Dorsolateral prefrontal cortex (tissue), 120 donors: ENCODE measurements at regions of chr3 and their contacts with region 1.

Region 1: DNA sequence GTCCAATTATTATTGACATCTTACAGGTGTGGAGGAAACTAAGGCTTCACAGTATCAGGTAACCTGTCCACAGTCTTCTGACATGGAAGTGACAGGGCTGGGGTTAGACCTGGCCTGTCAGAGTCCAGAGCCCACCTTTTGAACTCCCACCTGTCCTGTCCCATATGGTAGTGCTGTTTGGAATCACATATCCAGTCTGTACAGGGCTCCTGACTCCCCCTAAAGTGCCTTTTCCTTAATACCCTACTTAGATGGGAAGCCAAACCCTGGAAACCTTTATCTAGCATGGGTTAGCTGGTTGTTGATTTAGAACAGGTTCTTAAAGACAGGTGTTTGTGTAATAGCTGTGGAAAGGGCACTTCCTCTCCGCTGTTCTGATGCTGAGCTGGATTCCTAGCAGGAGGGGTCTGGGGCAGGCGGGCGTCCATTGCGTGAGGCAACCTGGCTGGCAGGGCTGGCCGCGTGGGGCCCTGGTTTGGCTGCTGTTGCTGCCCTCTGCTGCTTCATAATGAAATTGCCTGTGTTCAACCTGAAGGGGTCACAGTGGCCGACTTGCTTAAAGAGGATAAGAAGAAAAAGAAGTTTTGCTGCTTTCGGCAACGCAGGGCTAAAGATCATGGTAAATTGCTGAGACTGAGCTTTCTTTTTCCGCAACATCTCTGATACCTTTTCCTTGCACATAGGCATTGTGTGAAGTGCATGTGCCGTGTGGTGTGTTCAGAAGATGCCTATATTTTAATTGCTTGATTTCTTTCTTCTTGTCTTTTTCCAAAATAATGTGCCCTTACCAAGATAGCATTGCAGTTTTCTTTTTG is 136.2 kb downstream of the CHDH start:
- DNase-seq: peak; percentile 51 to 75 (median 65)
- H3K4me3 ChIP-seq: peak overlapping the region in 2 of 59 donors; percentile 20 to 27
- H3K27ac ChIP-seq: no peak overlapping the region
- H3K27me3 ChIP-seq: no peaks in the 10 kb centered on the region
- CTCF ChIP-seq: peak; percentile 53 to 94 (median 85)

Region 2: GRCh38 chr3:53236112-53236841 is 473.8 kb before region 1 on chr3:
- intact Hi-C with region 1: loop called in 1 of 2 experiments (anchors 10 kb)
- DNase-seq: peak in 7 of 10 donors; percentile 14 to 86 (median 54)
- H3K4me3 ChIP-seq: peak overlapping the region in 1 of 59 donors; percentile 21
- H3K27ac ChIP-seq: peak overlapping the region in 58 of 59 donors; percentile 40 to 92 (median 80)
- H3K27me3 ChIP-seq: no peaks in the 10 kb centered on the region
- CTCF ChIP-seq: no peak

Region 3: GRCh38 chr3:53295410-53295809 is 414.7 kb before region 1 on chr3:
- intact Hi-C with region 1: loop called (anchors 2 to 5 kb)
- DNase-seq: no peak
- H3K4me3 ChIP-seq: no peak overlapping the region
- H3K27ac ChIP-seq: no peak overlapping the region
- H3K27me3 ChIP-seq: no peaks in the 10 kb centered on the region
- CTCF ChIP-seq: no peak

Region 4: DNA sequence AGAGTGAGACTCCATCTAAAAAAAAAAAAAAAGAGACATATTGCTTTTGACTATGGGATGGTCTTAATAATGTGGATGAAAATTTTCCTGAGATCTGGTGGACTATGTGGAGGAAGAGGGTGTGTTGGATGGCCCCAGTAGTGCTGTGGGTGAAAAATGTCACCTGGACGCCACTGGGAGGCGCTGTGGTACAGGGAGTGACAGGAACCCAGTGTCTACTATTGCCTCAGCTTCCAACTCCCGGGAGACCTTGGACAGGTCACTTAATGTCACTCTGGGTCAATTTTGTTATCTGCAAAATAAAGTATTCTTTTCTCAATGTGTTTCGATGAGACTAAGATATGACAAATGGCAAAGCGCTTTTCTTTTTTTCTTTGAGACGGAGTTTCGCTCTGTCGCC is 335.0 kb before region 1 on chr3:
- intact Hi-C with region 1: loop called (anchors 5 to 10 kb)
- DNase-seq: peak in 9 of 10 donors; percentile 24 to 78 (median 46)
- H3K4me3 ChIP-seq: no peak overlapping the region
- H3K27ac ChIP-seq: no peak overlapping the region
- H3K27me3 ChIP-seq: peaks cover 0 to 6% (median 0%) of the 10 kb centered on the region in 45 donors
- CTCF ChIP-seq: peak; percentile 41 to 80 (median 70)

Region 5: GRCh38 chr3:53891497-53892285 is 181.6 kb after region 1 on chr3 and contains the start of gene SELENOK:
- intact Hi-C with region 1: loop called in 1 of 2 experiments (anchors 2 kb)
- DNase-seq: peak; percentile 97 to 100 (median 99)
- H3K4me3 ChIP-seq: peak within 1 kb of the TSS; percentile 62 to 100 (median 93)
- H3K27ac ChIP-seq: peak within 1 kb of the TSS; percentile 70 to 99 (median 92)
- H3K27me3 ChIP-seq: peaks cover 0 to 9% (median 0%) of the 10 kb centered on the region in 45 donors
- CTCF ChIP-seq: peak in 27 of 56 donors; percentile 4 to 59 (median 24)
- total RNA-seq, gene SELENOK: 24.0 to 95.9 (median 41.2) TPM